WTC11 (cell line): ENCODE measurements at regions of chr4 and their contacts with region 1.

Region 1: GRCh38 chr4:70839589-70840093 is at the start of gene GRSF1:
- DNase-seq: peak; percentile 94
- ATAC-seq: peak; percentile 92
- H3K4me3 Mint-ChIP-seq: peak within 1 kb of the TSS; percentile 94
- H3K27ac Mint-ChIP-seq: peak within 1 kb of the TSS; percentile 91
- H3K4me1 Mint-ChIP-seq: peaks cover 20% of the 10 kb centered on the region
- H3K27me3 Mint-ChIP-seq: no peaks in the 10 kb centered on the region
- CTCF ChIP-seq: no peak
- total RNA-seq, gene GRSF1: 84.6 to 98.5 TPM (median 84.7 TPM) in 3 replicates

Region 2: GRCh38 chr4:70901984-70902576 is 62.4 kb after region 1 on chr4 and contains the start of gene MOB1B:
- CTCF ChIA-PET with region 1: interaction called, 6 read pairs
- POLR2A ChIA-PET with region 1: interaction called, 18 read pairs
- DNase-seq: peak; percentile 95
- ATAC-seq: peak; percentile 94
- H3K4me3 Mint-ChIP-seq: peak within 1 kb of the TSS; percentile 98
- H3K27ac Mint-ChIP-seq: peak within 1 kb of the TSS; percentile 87
- H3K4me1 Mint-ChIP-seq: peaks cover 14% of the 10 kb centered on the region
- H3K27me3 Mint-ChIP-seq: no peaks in the 10 kb centered on the region
- CTCF ChIP-seq: no peak
- total RNA-seq, gene MOB1B: 26.1 to 28.6 TPM (median 28.0 TPM) in 3 replicates

Region 3: GRCh38 chr4:70993181-70994068 is 153.8 kb after region 1 on chr4 and contains the start of gene DCK:
- CTCF ChIA-PET with region 1: no interaction called
- POLR2A ChIA-PET with region 1: interaction called, 14 read pairs
- DNase-seq: peak; percentile 89
- ATAC-seq: peak; percentile 90
- H3K4me3 Mint-ChIP-seq: peak within 1 kb of the TSS; percentile 88
- H3K27ac Mint-ChIP-seq: peak within 1 kb of the TSS; percentile 91
- H3K4me1 Mint-ChIP-seq: peaks cover 54% of the 10 kb centered on the region
- H3K27me3 Mint-ChIP-seq: no peaks in the 10 kb centered on the region
- CTCF ChIP-seq: no peak
- total RNA-seq, gene DCK: 15.0 to 15.9 TPM (median 15.2 TPM) in 3 replicates